ENCODE measurements at regions of chr5 and their contacts with region 1.

Region 1: GRCh38 chr5:116137544-116138378 is 52.9 kb downstream of the COMMD10 start:
- DNase-seq: peak; percentile 32
- CTCF ChIP-seq: peak; percentile 52

Region 2: DNA sequence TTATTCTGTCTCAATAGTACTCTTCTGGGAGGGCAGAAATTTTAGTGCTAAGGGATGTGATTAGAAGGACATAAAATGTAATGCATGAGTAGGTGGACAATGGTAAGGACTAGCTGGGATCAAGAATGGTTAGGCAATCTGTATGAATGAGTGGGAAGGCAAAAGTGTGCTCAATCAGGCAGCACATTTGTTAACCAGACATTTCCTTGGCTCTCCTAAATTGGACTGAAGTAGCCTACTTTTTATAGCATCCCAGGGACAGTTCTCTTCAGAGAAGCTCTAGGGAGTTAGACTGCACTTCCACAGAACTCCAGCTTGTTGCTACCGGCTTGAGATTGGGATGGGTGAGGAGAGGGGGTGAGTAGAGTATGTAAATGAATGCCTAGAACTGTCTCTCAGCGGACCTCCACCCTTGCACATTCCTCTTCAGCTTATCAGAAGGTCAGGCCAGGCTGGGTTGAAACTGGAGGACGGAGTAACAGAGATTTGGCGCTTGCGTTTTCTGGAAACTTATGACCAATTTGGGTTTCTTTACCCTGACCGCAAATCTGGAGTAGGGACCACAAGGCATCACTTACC is 124.5 kb before region 1 on chr5:
- in situ Hi-C with region 1: no loop called
- DNase-seq: no peak
- CTCF ChIP-seq: no peak

Region 3: GRCh38 chr5:116320486-116320885 is 182.7 kb after region 1 on chr5:
- in situ Hi-C with region 1: no loop called
- DNase-seq: no peak
- CTCF ChIP-seq: no peak

Region 4: DNA sequence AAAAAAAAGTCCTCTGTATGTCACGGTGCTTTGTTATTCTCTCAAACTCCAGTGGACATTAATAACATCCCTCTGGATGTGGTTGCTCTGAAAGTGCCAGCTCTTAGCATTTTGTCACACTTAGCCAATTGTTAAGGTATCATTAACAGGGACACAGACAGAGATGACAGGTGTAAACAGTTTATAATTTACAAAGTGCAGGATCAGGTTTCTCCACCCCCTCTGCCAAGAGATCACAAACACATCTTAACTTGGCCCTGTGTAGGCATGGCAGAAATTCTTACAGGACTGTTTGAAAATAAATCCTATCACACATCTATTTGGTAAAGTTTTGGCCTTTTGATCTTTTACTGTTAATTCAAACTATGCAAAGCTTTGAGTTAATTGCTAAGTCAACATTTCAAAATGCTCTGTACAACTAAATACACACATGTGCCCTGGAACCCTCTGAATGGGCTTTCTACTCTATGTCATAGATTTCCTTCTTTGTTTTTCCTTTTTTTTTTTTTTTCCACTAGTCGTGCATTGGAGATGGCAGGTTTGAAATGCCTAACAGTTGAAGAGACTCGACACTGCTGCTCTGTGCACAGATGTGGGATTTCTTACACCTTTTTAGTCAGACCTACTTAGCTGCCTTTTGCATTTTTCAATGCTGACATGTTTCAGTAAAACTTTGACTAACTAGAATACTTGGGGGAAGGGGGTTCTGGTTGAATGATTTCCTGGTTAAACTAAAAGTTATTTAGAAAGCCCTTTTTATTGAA is 395.2 kb after region 1 on chr5:
- in situ Hi-C with region 1: loop called (anchors 25 kb)
- DNase-seq: no peak
- CTCF ChIP-seq: no peak

Region 5: GRCh38 chr5:116595498-116595897 is 457.7 kb after region 1 on chr5:
- in situ Hi-C with region 1: no loop called
- DNase-seq: no peak
- CTCF ChIP-seq: no peak